Heart left ventricle (tissue), 16 donors: ENCODE measurements at regions of chr3 and their contacts with region 1.

Region 1: GRCh38 chr3:50327943-50328691 is at the start of gene TUSC2:
- DNase-seq: peak; percentile 96 to 99 (median 98)
- ATAC-seq: peak; percentile 67 to 86 (median 84)
- H3K4me3 ChIP-seq: peak within 1 kb of the TSS; percentile 69 to 100 (median 90)
- H3K27ac ChIP-seq: peak within 1 kb of the TSS; percentile 59 to 93 (median 84)
- H3K4me1 ChIP-seq: peaks cover 5 to 58% (median 40%) of the 10 kb centered on the region in 12 donors
- H3K27me3 ChIP-seq: no peaks in the 10 kb centered on the region
- CTCF ChIP-seq: peak in 1 of 12 donors; percentile 11
- POLR2A ChIP-seq: peak; percentile 28 to 82
- total RNA-seq, gene TUSC2: 24.5 to 34.9 (median 29.0) TPM

Region 2: GRCh38 chr3:50292159-50293078 is 35.7 kb before region 1 on chr3 and contains the start of gene IFRD2:
- intact Hi-C with region 1: loop called in 1 of 10 experiments (anchors 5 kb)
- DNase-seq: peak; percentile 98 to 99 (median 98)
- ATAC-seq: peak; percentile 94 to 97 (median 94)
- H3K4me3 ChIP-seq: peak within 1 kb of the TSS; percentile 69 to 99 (median 90)
- H3K27ac ChIP-seq: peak within 1 kb of the TSS; percentile 69 to 96 (median 90)
- H3K4me1 ChIP-seq: peaks cover 4 to 43% (median 27%) of the 10 kb centered on the region in 12 donors
- H3K27me3 ChIP-seq: no peaks in the 10 kb centered on the region
- CTCF ChIP-seq: peak in 2 of 12 donors; percentile 4 to 17
- POLR2A ChIP-seq: peak; percentile 24 to 64
- total RNA-seq, gene IFRD2: 47.5 to 94.9 (median 61.4) TPM